AG04449 (cell line): ENCODE measurements at regions of chr19 and their contacts with region 1.

Region 1: DNA sequence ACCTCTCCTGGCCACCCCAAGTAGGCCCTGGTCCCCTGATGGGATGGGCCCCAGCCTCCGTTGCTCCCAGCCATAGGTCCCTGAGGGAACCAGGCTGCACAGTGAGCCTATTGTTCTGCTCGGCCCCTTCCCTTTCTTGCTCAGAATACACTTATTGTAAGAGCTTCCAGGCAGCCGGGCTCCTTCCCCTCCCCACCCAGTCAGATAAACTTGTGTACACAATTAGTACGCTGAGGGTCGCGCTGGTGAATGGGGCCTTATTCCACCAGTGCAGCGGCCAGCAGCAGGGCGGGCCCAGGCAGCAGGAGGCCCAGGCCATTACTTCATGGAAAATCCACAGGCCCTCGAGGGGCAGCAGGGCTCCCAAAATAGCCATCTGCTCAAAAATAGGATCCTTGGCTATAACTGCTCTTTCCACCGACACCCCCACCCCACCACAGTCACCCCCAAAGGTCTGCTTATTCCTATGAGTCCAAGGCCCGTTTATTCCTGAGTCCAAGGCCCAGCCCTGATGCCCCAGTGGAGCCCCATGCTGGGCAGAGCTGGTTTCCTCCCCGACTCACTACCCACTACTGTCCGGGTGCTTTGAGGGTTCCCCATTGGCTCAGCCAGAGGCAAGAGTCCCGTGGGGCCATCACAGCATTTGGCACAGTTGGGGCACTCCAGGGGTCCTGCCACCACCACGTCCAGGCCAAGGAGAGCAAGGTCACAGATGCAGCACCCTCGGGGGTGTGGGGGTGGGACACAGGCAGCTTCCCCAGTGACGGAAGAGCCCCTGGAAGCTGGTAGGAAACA is 22.1 kb downstream of the CAPN12 start:
- DNase-seq: no peak
- H3K4me3 ChIP-seq: no peak overlapping the region
- CTCF ChIP-seq: no peak

Region 2: GRCh38 chr19:38711726-38712153 is 10.4 kb before region 1 on chr19:
- CTCF ChIA-PET with region 1: interaction called, 12 read pairs
- POLR2A ChIA-PET with region 1: interaction called, 4 read pairs
- DNase-seq: no peak
- H3K4me3 ChIP-seq: no peak overlapping the region
- CTCF ChIP-seq: peak; percentile 4

Region 3: GRCh38 chr19:38733436-38734175 is 11.4 kb after region 1 on chr19:
- CTCF ChIA-PET with region 1: interaction called, 11 read pairs
- POLR2A ChIA-PET with region 1: interaction called, 6 read pairs
- DNase-seq: no peak
- H3K4me3 ChIP-seq: no peak overlapping the region
- CTCF ChIP-seq: no peak

Region 4: DNA sequence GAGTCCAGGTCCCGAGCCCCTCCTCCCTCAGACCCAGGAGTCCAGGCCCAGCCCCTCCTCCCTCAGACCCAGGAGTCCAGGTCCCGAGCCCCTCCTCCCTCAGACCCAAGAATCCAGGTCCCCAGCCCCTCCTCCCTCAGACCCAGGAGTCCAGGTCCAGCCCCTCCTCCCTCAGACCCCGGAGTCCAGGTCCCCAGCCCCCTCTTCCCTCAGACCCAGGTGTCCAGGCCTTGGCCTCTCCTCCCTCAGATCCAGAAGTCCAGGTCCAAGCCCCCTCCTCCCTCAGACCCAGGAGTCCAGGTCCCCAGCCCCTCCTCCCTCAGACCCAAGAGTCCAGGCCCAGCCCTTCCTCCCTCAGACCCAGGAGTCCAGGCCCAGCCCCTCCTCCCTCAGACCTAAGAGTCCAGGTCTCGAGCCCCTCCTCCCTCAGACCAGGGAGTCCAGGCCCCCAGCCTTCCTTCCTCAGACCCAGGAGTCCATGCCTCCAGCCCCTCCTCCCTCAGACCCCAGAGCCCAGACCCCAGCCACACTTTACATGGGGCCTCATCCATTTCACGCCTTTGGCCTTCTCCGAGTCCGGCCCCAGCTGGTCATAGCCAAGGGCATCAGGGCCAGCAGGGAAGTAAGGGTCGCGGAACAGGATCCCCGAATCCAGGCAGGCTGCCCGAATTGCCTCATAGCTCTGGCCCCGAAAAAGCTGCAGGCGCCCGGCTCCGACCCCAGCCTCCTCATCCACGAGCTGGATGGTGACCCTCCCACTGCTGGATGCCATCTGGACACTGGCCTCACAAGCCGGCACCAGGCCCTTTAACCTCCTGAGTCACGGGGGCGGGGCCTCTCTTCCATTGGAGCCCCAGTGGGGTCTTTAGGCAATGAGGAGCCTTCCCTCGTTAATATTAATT is 21.5 kb after region 1 on chr19:
- CTCF ChIA-PET with region 1: no interaction called
- POLR2A ChIA-PET with region 1: no interaction called
- DNase-seq: no peak
- H3K4me3 ChIP-seq: no peak overlapping the region
- CTCF ChIP-seq: no peak

Region 5: DNA sequence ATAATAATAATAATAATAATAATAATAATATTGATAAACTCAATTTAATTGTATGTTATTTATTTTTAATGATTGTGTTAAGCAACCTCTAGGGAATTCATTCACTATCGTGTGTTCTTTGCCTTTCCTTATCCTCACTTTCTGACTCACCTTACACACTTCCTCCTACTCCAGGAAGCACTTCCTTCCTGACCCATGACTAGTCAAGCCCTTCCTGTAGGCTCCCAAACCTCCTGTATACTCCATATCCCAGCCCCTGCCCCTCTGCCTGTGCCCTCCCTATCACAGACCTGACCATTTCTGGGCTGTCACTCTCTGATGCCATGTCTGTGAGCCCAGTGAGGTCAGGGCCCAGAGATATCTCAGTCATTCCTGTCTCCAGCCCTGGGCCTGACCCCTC is 83.0 kb after region 1 on chr19:
- CTCF ChIA-PET with region 1: no interaction called
- POLR2A ChIA-PET with region 1: no interaction called
- DNase-seq: no peak
- H3K4me3 ChIP-seq: no peak overlapping the region
- CTCF ChIP-seq: no peak